ENCODE measurements at regions of chr10 and their contacts with region 1.

Region 1: GRCh38 chr10:23702977-23703414 is 264.1 kb downstream of the OTUD1 start:
- DNase-seq: peak; percentile 26
- H3K4me3 Mint-ChIP-seq: no peak overlapping the region
- H3K27ac Mint-ChIP-seq: no peak overlapping the region
- H3K4me1 Mint-ChIP-seq: peaks cover 2% of the 10 kb centered on the region
- H3K27me3 Mint-ChIP-seq: peaks cover 18% of the 10 kb centered on the region

Region 2: GRCh38 chr10:23158370-23158769 is 544.6 kb before region 1 on chr10:
- intact Hi-C with region 1: loop called (anchors 5 kb)
- DNase-seq: no peak
- H3K4me3 Mint-ChIP-seq: no peak overlapping the region
- H3K27ac Mint-ChIP-seq: no peak overlapping the region
- H3K4me1 Mint-ChIP-seq: peaks cover 10% of the 10 kb centered on the region
- H3K27me3 Mint-ChIP-seq: peaks cover 7% of the 10 kb centered on the region

Region 3: GRCh38 chr10:23314835-23315239 is 388.2 kb before region 1 on chr10:
- intact Hi-C with region 1: loop called (anchors 1 kb)
- DNase-seq: no peak
- H3K4me3 Mint-ChIP-seq: no peak overlapping the region
- H3K27ac Mint-ChIP-seq: no peak overlapping the region
- H3K4me1 Mint-ChIP-seq: peaks cover 2% of the 10 kb centered on the region
- H3K27me3 Mint-ChIP-seq: peaks cover 5% of the 10 kb centered on the region

Region 4: GRCh38 chr10:23516530-23516929 is 186.5 kb before region 1 on chr10:
- intact Hi-C with region 1: loop called (anchors 5 kb)
- DNase-seq: no peak
- H3K4me3 Mint-ChIP-seq: no peak overlapping the region
- H3K27ac Mint-ChIP-seq: no peak overlapping the region
- H3K4me1 Mint-ChIP-seq: peaks cover 20% of the 10 kb centered on the region
- H3K27me3 Mint-ChIP-seq: peaks cover 25% of the 10 kb centered on the region

Region 5: GRCh38 chr10:23535381-23535780 is 167.6 kb before region 1 on chr10:
- intact Hi-C with region 1: loop called (anchors 5 kb)
- DNase-seq: no peak
- H3K4me3 Mint-ChIP-seq: no peak overlapping the region
- H3K27ac Mint-ChIP-seq: no peak overlapping the region
- H3K4me1 Mint-ChIP-seq: peaks cover 47% of the 10 kb centered on the region
- H3K27me3 Mint-ChIP-seq: no peaks in the 10 kb centered on the region

Measured in activated T-helper 2 cell treated with anti-CD3 and anti-CD28 coated beads, Interferon-gamma antibody, Interleukin-2, Interleukin-4, amounts not matched to agents 10 μg/mL and 5 μg/mL and 100 μg/mL, durations not matched to agents 14 hours and 24 hours and 36 hours (primary cell).